Naive thymus-derived CD4-positive, alpha-beta T cell (primary cell): ENCODE measurements at regions of chr1 and their contacts with region 1.

Region 1: GRCh38 chr1:207499573-207499972 is 3.6 kb downstream of the CR1 start:
- DNase-seq: peak; percentile 29 to 78 (median 65)
- ATAC-seq: peak; percentile 79
- H3K4me3 ChIP-seq: no peak overlapping the region
- H3K4me3 Mint-ChIP-seq: no peak overlapping the region
- H3K27ac ChIP-seq: no peak overlapping the region
- H3K27ac Mint-ChIP-seq: peak overlapping the region in 1 of 9 donors; percentile 59
- H3K4me1 ChIP-seq: peaks cover 0 to 6% of the 10 kb centered on the region in 2 donors
- H3K4me1 Mint-ChIP-seq: peaks cover 6 to 17% (median 11%) of the 10 kb centered on the region in 7 donors
- H3K27me3 ChIP-seq: no peaks in the 10 kb centered on the region
- H3K27me3 Mint-ChIP-seq: peaks cover 5 to 60% (median 23%) of the 10 kb centered on the region in 5 donors

Region 2: DNA sequence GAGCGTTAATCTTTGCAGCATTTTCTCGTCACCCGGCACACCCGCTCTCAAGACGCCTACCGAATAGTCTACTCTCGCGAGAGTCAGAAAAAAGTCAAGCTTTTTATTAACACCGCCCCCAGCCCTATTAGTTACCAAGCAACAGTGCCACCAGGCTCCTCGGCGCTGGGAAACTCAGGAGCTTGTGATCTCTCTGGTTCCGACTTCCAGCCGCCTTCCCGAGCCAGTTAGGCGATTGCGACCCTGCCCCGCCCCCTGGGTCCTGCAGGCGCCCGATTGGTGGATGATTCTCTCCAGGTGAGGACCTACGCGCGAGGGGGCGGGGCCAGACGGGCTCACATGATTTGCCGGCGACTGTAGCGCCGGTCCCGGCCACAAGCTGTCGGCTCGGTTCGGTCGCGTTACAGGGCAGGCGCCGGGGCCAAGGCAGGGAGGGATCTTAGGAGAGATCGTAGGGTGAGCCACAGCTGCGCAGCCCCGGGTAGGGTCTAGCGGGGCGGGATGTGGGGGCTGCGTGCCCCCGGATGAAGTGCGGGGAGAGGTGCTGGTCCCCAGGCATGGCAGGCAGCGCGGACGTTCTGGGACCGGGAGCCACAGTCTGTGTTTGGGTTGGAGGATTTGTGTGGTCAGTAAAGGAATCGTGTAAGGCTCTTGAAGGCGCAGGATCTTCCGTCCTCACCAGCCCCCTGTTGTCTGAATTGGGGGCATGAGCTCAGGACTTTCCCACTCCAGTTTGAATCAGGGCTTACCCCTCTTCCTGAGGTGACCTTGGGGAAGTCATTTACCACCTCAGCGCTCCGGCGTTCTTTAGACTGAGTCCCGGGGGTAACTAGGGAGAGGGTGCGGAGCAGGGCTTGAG is 446.4 kb before region 1 on chr1 and contains the start of gene PFKFB2:
- CTCF ChIA-PET with region 1: interaction called, 6 read pairs
- POLR2A ChIA-PET with region 1: no interaction called
- intact Hi-C with region 1: loop called (anchors 1 kb)
- DNase-seq: peak; percentile 93 to 97 (median 96)
- ATAC-seq: peak; percentile 93
- H3K4me3 ChIP-seq: peak within 1 kb of the TSS; percentile 85
- H3K4me3 Mint-ChIP-seq: peak within 1 kb of the TSS; percentile 95 to 100 (median 98)
- H3K27ac ChIP-seq: peak within 1 kb of the TSS; percentile 72
- H3K27ac Mint-ChIP-seq: peak within 1 kb of the TSS; percentile 86 to 100 (median 97)
- H3K4me1 ChIP-seq: peaks cover 11 to 16% of the 10 kb centered on the region in 2 donors
- H3K4me1 Mint-ChIP-seq: peaks cover 25 to 54% (median 49%) of the 10 kb centered on the region in 7 donors
- H3K27me3 ChIP-seq: no peaks in the 10 kb centered on the region
- H3K27me3 Mint-ChIP-seq: peaks cover 0 to 12% (median 0%) of the 10 kb centered on the region in 5 donors
- total RNA-seq, gene PFKFB2: 2.3 to 4.6 (median 3.8) TPM

Region 3: DNA sequence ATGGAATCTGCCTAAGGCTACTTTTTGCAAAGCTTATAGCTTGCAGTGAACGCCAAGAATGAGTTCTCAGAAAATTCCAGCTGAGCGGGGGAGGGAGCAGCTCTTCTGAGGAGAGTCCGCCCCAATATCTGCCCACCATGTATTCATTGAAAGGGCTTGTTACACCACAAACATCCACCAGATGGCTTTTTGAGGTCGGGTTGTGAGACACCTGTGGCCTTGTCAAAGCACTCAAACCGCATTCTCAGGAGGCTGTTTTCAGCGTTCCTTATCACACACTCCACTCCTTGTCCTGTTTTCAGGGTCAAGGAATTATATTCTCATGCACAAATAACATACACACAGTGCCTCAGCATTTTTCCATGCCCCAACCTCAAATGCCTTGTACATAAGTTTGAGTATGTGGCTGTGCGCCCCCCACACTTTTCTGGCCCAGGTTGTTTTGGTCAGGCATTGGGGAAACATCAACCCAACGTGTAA is 414.8 kb before region 1 on chr1:
- CTCF ChIA-PET with region 1: interaction called, 26 read pairs
- POLR2A ChIA-PET with region 1: no interaction called
- intact Hi-C with region 1: loop called (anchors 1 kb)
- DNase-seq: peak in 8 of 9 donors; percentile 43 to 71 (median 62)
- ATAC-seq: peak; percentile 67
- H3K4me3 ChIP-seq: no peak overlapping the region
- H3K4me3 Mint-ChIP-seq: no peak overlapping the region
- H3K27ac ChIP-seq: no peak overlapping the region
- H3K27ac Mint-ChIP-seq: peak overlapping the region in 5 of 9 donors; percentile 5 to 78 (median 53)
- H3K4me1 ChIP-seq: peaks cover 0 to 15% of the 10 kb centered on the region in 2 donors
- H3K4me1 Mint-ChIP-seq: peaks cover 3 to 33% (median 32%) of the 10 kb centered on the region in 7 donors
- H3K27me3 ChIP-seq: no peaks in the 10 kb centered on the region
- H3K27me3 Mint-ChIP-seq: peaks cover 0 to 34% (median 0%) of the 10 kb centered on the region in 5 donors

Region 4: DNA sequence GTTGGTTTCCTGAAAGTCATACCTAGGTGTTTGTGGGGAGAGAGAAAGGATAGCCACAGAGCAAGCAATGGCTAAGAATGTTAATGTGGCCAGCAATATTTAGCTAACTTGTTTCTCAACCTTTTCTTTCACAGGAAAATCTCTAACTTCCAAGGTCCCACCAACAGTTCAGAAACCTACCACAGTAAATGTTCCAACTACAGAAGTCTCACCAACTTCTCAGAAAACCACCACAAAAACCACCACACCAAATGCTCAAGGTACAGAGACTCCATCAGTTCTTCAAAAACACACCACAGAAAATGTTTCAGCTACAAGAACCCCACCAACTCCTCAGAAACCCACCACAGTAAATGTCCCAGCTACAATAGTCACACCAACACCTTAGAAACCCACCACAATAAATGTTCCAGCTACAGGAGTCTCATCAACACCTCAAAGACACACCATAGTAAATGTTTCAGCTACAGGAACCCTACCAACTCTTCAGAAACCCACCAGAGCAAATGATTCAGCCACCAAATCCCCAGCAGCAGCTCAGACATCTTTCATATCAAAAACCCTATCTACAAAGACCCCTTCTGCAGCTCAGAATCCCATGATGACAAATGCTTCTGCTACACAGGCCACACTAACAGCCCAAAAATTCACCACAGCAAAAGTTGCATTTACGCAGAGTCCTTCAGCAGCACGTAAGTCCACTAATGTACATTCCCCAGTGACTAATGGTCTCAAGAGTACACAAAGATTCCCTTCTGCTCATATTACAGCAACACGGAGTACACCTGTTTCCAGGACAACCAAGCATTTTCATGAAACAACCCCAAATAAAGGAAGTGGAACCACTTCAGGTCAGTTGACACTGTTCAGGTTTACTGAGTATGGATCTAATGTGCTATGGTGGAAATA is 162.8 kb before region 1 on chr1:
- CTCF ChIA-PET with region 1: no interaction called
- POLR2A ChIA-PET with region 1: no interaction called
- intact Hi-C with region 1: loop called in 1 of 2 experiments (anchors 5 kb)
- DNase-seq: peak in 8 of 9 donors; percentile 42 to 67 (median 55)
- ATAC-seq: peak; percentile 56
- H3K4me3 ChIP-seq: peak overlapping the region; percentile 31
- H3K4me3 Mint-ChIP-seq: peak overlapping the region; percentile 35 to 78 (median 71)
- H3K27ac ChIP-seq: peak overlapping the region; percentile 65
- H3K27ac Mint-ChIP-seq: peak overlapping the region; percentile 70 to 94 (median 88)
- H3K4me1 ChIP-seq: peaks cover 24 to 38% of the 10 kb centered on the region in 2 donors
- H3K4me1 Mint-ChIP-seq: peaks cover 46 to 86% (median 74%) of the 10 kb centered on the region in 7 donors
- H3K27me3 ChIP-seq: no peaks in the 10 kb centered on the region
- H3K27me3 Mint-ChIP-seq: no peaks in the 10 kb centered on the region

Region 5: DNA sequence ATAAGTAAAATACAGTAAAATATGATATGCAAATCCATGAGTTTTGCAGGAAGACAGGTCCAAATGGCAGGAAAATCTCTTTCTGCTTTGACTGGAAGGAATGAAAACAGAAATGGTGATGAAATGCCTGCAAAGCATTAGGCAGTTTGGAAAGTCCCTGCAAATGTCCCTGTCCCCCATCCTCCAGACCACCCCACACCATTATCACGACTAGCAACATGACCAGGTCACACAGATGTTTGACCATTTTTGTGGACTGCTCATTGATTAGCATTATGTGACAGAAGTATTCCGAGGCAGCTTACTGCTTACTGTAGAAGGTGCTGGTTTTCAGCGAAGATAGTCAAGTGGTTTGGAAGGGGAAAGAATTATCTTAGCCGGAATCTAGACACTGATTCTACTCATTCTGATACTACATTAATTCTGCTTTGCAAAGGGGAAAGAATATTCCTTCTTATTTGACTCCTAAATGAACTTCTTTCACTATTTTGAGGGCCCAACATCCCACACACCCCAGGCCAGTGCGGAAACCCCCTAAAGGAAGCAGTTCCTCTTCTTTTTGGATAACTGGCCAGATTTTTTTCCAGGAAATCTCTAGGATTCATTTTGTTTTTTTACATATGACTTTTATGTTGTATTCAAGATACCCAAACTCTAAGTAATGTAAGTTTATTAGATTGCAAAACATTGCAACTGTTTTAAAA is 54.9 kb before region 1 on chr1:
- CTCF ChIA-PET with region 1: no interaction called
- POLR2A ChIA-PET with region 1: no interaction called
- intact Hi-C with region 1: loop called in 1 of 2 experiments (anchors 2 kb)
- DNase-seq: no peak
- ATAC-seq: no peak
- H3K4me3 ChIP-seq: no peak overlapping the region
- H3K4me3 Mint-ChIP-seq: no peak overlapping the region
- H3K27ac ChIP-seq: no peak overlapping the region
- H3K27ac Mint-ChIP-seq: no peak overlapping the region
- H3K4me1 ChIP-seq: no peaks in the 10 kb centered on the region
- H3K4me1 Mint-ChIP-seq: no peaks in the 10 kb centered on the region
- H3K27me3 ChIP-seq: no peaks in the 10 kb centered on the region
- H3K27me3 Mint-ChIP-seq: peaks cover 0 to 39% (median 1%) of the 10 kb centered on the region in 5 donors

Region 6: GRCh38 chr1:207463021-207463420 is 36.6 kb before region 1 on chr1:
- CTCF ChIA-PET with region 1: interaction called, 9 read pairs
- POLR2A ChIA-PET with region 1: interaction called, 4 read pairs
- intact Hi-C with region 1: loop called in 1 of 2 experiments (anchors 1 kb)
- DNase-seq: no peak
- ATAC-seq: no peak
- H3K4me3 ChIP-seq: no peak overlapping the region
- H3K4me3 Mint-ChIP-seq: peak overlapping the region in 5 of 10 donors; percentile 3 to 70 (median 14)
- H3K27ac ChIP-seq: no peak overlapping the region
- H3K27ac Mint-ChIP-seq: peak overlapping the region in 4 of 9 donors; percentile 7 to 87 (median 35)
- H3K4me1 ChIP-seq: peaks cover 4 to 62% of the 10 kb centered on the region in 2 donors
- H3K4me1 Mint-ChIP-seq: peaks cover 4 to 65% (median 22%) of the 10 kb centered on the region in 7 donors
- H3K27me3 ChIP-seq: peaks cover 0 to 5% of the 10 kb centered on the region in 2 donors
- H3K27me3 Mint-ChIP-seq: peaks cover 0 to 17% (median 0%) of the 10 kb centered on the region in 5 donors

Region 7: GRCh38 chr1:209241487-209241886 is 1741.9 kb after region 1 on chr1:
- CTCF ChIA-PET with region 1: no interaction called
- POLR2A ChIA-PET with region 1: no interaction called
- intact Hi-C with region 1: no loop called
- DNase-seq: no peak
- ATAC-seq: no peak
- H3K4me3 ChIP-seq: no peak overlapping the region
- H3K4me3 Mint-ChIP-seq: no peak overlapping the region
- H3K27ac ChIP-seq: no peak overlapping the region
- H3K27ac Mint-ChIP-seq: no peak overlapping the region
- H3K4me1 ChIP-seq: no peaks in the 10 kb centered on the region
- H3K4me1 Mint-ChIP-seq: no peaks in the 10 kb centered on the region
- H3K27me3 ChIP-seq: no peaks in the 10 kb centered on the region
- H3K27me3 Mint-ChIP-seq: peaks cover 0 to 26% (median 14%) of the 10 kb centered on the region in 5 donors